CD8-positive, alpha-beta T cell (primary cell): ENCODE measurements at regions of chr17 and their contacts with region 1.

Region 1: GRCh38 chr17:28371245-28372202 is at the start of gene SARM1:
- DNase-seq: peak; percentile 45 to 91 (median 81)
- ATAC-seq: peak; percentile 86
- H3K4me3 ChIP-seq: peak within 1 kb of the TSS; percentile 79
- H3K4me3 Mint-ChIP-seq: peak within 1 kb of the TSS; percentile 90
- H3K27ac ChIP-seq: peak within 1 kb of the TSS; percentile 69 to 93
- H3K27ac Mint-ChIP-seq: peak within 1 kb of the TSS; percentile 91
- H3K4me1 ChIP-seq: peaks cover 21% of the 10 kb centered on the region
- H3K4me1 Mint-ChIP-seq: peaks cover 25% of the 10 kb centered on the region
- H3K27me3 ChIP-seq: no peaks in the 10 kb centered on the region
- H3K27me3 Mint-ChIP-seq: no peaks in the 10 kb centered on the region
- CTCF ChIP-seq: no peak
- total RNA-seq, gene SARM1: 12.9 to 13.9 TPM

Region 2: GRCh38 chr17:27862004-27862403 is 509.5 kb before region 1 on chr17:
- CTCF ChIA-PET with region 1: no interaction called
- POLR2A ChIA-PET with region 1: no interaction called
- intact Hi-C with region 1: no loop called
- DNase-seq: no peak
- ATAC-seq: no peak
- H3K4me3 ChIP-seq: no peak overlapping the region
- H3K4me3 Mint-ChIP-seq: no peak overlapping the region
- H3K27ac ChIP-seq: no peak overlapping the region
- H3K27ac Mint-ChIP-seq: no peak overlapping the region
- H3K4me1 ChIP-seq: no peaks in the 10 kb centered on the region
- H3K4me1 Mint-ChIP-seq: no peaks in the 10 kb centered on the region
- H3K27me3 ChIP-seq: no peaks in the 10 kb centered on the region
- H3K27me3 Mint-ChIP-seq: no peaks in the 10 kb centered on the region
- CTCF ChIP-seq: no peak

Region 3: GRCh38 chr17:28306954-28307401 is 64.5 kb before region 1 on chr17:
- CTCF ChIA-PET with region 1: no interaction called
- POLR2A ChIA-PET with region 1: no interaction called
- intact Hi-C with region 1: loop called in 1 of 2 experiments (anchors 1 kb)
- DNase-seq: no peak
- ATAC-seq: no peak
- H3K4me3 ChIP-seq: no peak overlapping the region
- H3K4me3 Mint-ChIP-seq: no peak overlapping the region
- H3K27ac ChIP-seq: no peak overlapping the region
- H3K27ac Mint-ChIP-seq: no peak overlapping the region
- H3K4me1 ChIP-seq: no peaks in the 10 kb centered on the region
- H3K4me1 Mint-ChIP-seq: no peaks in the 10 kb centered on the region
- H3K27me3 ChIP-seq: no peaks in the 10 kb centered on the region
- H3K27me3 Mint-ChIP-seq: peaks cover 18% of the 10 kb centered on the region
- CTCF ChIP-seq: no peak

Region 4: DNA sequence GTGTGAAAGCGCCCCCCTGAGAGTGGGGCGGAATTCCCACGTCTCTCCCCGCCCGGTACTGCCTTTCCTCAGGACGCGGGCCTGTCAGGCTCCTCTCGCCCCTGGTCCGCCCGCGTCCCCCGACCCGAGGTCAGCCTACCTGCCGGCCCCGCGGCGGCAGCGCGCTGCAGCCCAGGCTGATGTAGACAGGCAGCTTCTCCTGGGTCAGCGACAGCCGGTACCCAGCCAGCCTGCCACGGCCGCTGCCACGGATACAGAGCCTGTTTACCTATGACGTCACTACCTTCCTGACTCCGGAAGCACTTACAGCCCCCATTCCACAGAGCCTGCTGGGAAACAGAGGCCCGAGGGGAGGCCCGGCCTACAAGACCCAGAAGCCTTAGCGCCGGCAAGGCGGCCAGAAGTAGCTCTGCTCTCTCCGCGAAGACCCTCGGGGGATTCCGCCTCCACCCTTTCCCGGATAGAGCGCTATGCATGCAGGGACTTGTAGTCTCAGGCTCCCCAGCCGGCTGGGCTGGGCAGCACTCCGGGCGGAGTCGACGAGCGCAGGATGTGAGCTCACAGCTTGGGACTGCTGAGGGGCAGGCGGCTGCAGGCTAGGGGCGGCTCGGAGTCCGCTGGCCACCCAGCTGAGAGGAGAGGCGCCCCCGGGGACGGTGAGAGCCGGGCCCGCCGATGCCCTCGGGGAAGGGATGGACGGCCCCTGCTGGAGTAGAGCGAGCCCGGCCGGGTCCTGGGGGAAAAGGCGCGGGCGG is 36.1 kb before region 1 on chr17 and contains the starts of genes IFT20 and TNFAIP1:
- CTCF ChIA-PET with region 1: no interaction called
- POLR2A ChIA-PET with region 1: interaction called, 7 read pairs
- intact Hi-C with region 1: loop called (anchors 1 kb)
- DNase-seq: peak; percentile 94 to 100 (median 97)
- ATAC-seq: peak; percentile 96
- H3K4me3 ChIP-seq: peak within 1 kb of the TSS; percentile 80 to 95
- H3K4me3 Mint-ChIP-seq: peak within 1 kb of the TSS; percentile 99
- H3K27ac ChIP-seq: peak within 1 kb of the TSS; percentile 92 to 97
- H3K27ac Mint-ChIP-seq: peak within 1 kb of the TSS; percentile 97
- H3K4me1 ChIP-seq: peaks cover 22% of the 10 kb centered on the region
- H3K4me1 Mint-ChIP-seq: peaks cover 41% of the 10 kb centered on the region
- H3K27me3 ChIP-seq: no peaks in the 10 kb centered on the region
- H3K27me3 Mint-ChIP-seq: no peaks in the 10 kb centered on the region
- CTCF ChIP-seq: no peak
- total RNA-seq, gene IFT20: 32.5 to 34.6 TPM
- total RNA-seq, gene TNFAIP1: 15.3 to 15.5 TPM

Region 5: DNA sequence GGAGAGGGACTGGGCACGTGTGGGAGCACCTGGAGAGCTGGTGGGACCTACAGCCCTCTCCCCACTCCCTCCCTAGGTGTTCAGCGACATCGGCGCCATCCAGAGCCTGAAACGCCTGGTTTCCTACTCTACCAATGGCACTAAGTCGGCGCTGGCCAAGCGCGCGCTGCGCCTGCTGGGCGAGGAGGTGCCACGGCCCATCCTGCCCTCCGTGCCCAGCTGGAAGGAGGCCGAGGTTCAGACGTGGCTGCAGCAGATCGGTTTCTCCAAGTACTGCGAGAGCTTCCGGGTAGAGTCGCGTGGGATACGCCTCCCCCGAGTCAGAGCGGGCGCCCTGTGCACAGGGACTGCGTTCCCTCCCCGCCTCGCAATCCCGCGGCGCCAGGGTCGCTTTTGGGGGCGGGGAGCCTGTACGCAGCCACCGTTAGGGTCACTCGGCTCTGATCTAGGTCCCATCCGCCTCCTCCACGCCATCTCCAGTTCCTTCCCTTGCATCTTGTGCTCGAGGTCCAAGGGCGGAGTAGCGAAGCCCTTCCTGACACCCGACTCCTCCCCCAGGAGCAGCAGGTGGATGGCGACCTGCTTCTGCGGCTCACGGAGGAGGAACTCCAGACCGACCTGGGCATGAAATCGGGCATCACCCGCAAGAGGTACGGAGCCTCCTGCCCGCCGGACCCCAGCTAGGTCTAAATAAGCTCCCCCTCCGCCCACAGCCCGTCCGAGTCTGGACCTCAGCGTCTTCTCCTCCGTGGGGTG is 12.9 kb after region 1 on chr17:
- CTCF ChIA-PET with region 1: no interaction called
- POLR2A ChIA-PET with region 1: interaction called, 18 read pairs
- intact Hi-C with region 1: loop called in 1 of 2 experiments (anchors 1 kb)
- DNase-seq: peak; percentile 21 to 77 (median 65)
- ATAC-seq: peak; percentile 93
- H3K4me3 ChIP-seq: peak overlapping the region; percentile 75 to 83
- H3K4me3 Mint-ChIP-seq: peak overlapping the region; percentile 92
- H3K27ac ChIP-seq: peak overlapping the region; percentile 7 to 46
- H3K27ac Mint-ChIP-seq: peak overlapping the region; percentile 52
- H3K4me1 ChIP-seq: peaks cover 25% of the 10 kb centered on the region
- H3K4me1 Mint-ChIP-seq: peaks cover 27% of the 10 kb centered on the region
- H3K27me3 ChIP-seq: no peaks in the 10 kb centered on the region
- H3K27me3 Mint-ChIP-seq: peaks cover 6% of the 10 kb centered on the region
- CTCF ChIP-seq: no peak

Region 6: GRCh38 chr17:28540231-28540630 is 168.7 kb after region 1 on chr17:
- CTCF ChIA-PET with region 1: no interaction called
- POLR2A ChIA-PET with region 1: no interaction called
- intact Hi-C with region 1: loop called in 1 of 2 experiments (anchors 1 kb)
- DNase-seq: no peak
- ATAC-seq: no peak
- H3K4me3 ChIP-seq: no peak overlapping the region
- H3K4me3 Mint-ChIP-seq: no peak overlapping the region
- H3K27ac ChIP-seq: no peak overlapping the region
- H3K27ac Mint-ChIP-seq: no peak overlapping the region
- H3K4me1 ChIP-seq: no peaks in the 10 kb centered on the region
- H3K4me1 Mint-ChIP-seq: no peaks in the 10 kb centered on the region
- H3K27me3 ChIP-seq: no peaks in the 10 kb centered on the region
- H3K27me3 Mint-ChIP-seq: no peaks in the 10 kb centered on the region
- CTCF ChIP-seq: no peak